ENCODE measurements at regions of chr7 and their contacts with region 1.

Region 1: GRCh38 chr7:77935652-77936348 is 137.2 kb downstream of the PHTF2 start:
- DNase-seq: no peak
- H3K4me3 ChIP-seq: no peak overlapping the region
- H3K27ac ChIP-seq: no peak overlapping the region
- H3K4me1 ChIP-seq: no peaks in the 10 kb centered on the region
- H3K27me3 ChIP-seq: no peaks in the 10 kb centered on the region
- CTCF ChIP-seq: peak in 4 of 6 experiments; percentile 24 to 53 (median 36)
- POLR2A ChIP-seq: no peak

Region 2: DNA sequence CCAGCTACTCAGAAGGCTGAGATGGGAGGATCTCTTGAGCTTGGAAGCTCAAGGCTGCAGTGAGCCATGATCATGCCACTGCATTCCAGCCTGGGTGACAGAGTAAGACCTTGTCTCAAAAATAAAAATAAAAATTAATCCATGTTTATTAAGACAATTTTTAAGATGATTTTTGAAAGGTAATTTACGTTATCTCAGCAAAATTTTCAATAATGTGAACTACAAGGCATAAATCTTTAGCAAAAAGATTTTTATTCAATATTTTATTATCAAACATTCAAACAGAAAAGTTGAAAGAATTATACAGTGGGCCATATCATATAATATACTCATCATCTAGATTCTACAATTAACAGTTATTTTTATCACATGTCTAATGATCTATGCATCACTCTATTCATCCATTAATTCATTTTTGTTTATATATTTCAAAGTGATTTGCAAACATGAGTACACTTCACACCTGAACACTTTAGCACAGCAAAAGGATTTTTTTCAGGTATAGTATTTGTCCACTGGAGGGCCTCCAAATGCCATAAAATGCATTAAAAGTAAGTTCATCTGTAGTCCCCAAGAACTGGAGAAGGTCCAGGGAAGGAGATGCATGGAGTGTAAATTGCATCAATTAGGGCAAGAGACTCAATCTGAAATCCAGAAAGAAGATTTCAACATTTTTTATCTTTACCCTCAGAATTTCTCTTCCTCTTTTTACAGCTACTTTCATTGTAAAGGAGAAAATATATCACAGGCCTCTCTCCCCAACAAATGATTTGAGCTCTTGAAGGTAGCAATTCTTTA is 278.2 kb before region 1 on chr7:
- intact Hi-C with region 1: loop called (anchors 10 kb)
- DNase-seq: no peak
- H3K4me3 ChIP-seq: no peak overlapping the region
- H3K27ac ChIP-seq: no peak overlapping the region
- H3K4me1 ChIP-seq: peaks cover 6 to 16% of the 10 kb centered on the region in 2 donors
- H3K27me3 ChIP-seq: no peaks in the 10 kb centered on the region
- CTCF ChIP-seq: peak in 4 of 6 experiments; percentile 48 to 73 (median 58)
- POLR2A ChIP-seq: no peak